Activated naive CD4-positive, alpha-beta T cell treated with anti-CD3 and anti-CD28 coated beads for 36 hours (primary cell): ENCODE measurements at regions of chr18 and their contacts with region 1.

Region 1: DNA sequence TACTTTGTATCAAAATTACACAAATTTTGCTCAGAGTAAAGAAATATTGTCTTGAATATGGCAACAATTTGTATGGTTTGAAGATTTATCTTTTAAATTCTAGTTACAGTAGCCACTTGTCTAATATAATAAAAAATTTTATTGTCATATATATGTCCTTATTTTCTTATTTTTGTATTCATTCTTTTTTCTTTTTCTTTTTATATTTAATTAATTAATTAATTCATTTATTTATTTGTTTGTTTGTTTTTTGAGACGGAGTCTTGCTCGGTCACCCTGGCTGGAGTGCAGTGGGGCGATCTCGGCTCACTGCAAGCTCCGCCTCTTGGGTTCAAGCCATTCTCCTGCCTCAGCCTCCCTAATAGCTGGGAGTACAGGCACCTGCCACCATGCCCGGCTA is 3.7 kb upstream of the CDH19 start:
- DNase-seq: no peak
- H3K4me3 Mint-ChIP-seq: no peak overlapping the region
- H3K27ac Mint-ChIP-seq: no peak overlapping the region
- H3K4me1 Mint-ChIP-seq: no peaks in the 10 kb centered on the region
- H3K27me3 Mint-ChIP-seq: no peaks in the 10 kb centered on the region

Region 2: GRCh38 chr18:65601775-65602174 is 1005.9 kb before region 1 on chr18:
- CTCF ChIA-PET with region 1: no interaction called
- intact Hi-C with region 1: loop called (anchors 5 kb)
- DNase-seq: no peak
- H3K4me3 Mint-ChIP-seq: no peak overlapping the region
- H3K27ac Mint-ChIP-seq: no peak overlapping the region
- H3K4me1 Mint-ChIP-seq: no peaks in the 10 kb centered on the region
- H3K27me3 Mint-ChIP-seq: no peaks in the 10 kb centered on the region

Region 3: DNA sequence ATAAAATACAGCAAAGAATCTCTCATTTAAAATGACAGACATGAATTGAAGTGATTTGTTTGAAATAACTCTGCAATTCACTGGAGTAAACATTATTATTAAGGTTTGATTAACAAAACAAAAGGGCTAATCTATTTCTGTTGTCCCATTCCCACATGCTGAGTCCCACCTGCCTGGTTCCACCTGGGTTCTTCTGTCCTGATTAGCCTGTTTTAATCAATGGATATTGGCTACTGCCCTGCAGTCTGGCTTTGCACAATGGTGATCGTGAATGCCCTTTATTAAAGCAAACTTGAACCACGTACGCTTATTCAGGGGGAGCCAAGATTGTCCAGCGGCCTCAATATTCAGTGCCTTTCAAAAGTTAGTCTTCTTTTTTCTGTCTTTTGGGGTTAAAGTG is 69.1 kb after region 1 on chr18:
- CTCF ChIA-PET with region 1: no interaction called
- intact Hi-C with region 1: no loop called
- DNase-seq: no peak
- H3K4me3 Mint-ChIP-seq: no peak overlapping the region
- H3K27ac Mint-ChIP-seq: no peak overlapping the region
- H3K4me1 Mint-ChIP-seq: no peaks in the 10 kb centered on the region
- H3K27me3 Mint-ChIP-seq: no peaks in the 10 kb centered on the region